ENCODE measurements at regions of chr21 and their contacts with region 1.

Region 1: DNA sequence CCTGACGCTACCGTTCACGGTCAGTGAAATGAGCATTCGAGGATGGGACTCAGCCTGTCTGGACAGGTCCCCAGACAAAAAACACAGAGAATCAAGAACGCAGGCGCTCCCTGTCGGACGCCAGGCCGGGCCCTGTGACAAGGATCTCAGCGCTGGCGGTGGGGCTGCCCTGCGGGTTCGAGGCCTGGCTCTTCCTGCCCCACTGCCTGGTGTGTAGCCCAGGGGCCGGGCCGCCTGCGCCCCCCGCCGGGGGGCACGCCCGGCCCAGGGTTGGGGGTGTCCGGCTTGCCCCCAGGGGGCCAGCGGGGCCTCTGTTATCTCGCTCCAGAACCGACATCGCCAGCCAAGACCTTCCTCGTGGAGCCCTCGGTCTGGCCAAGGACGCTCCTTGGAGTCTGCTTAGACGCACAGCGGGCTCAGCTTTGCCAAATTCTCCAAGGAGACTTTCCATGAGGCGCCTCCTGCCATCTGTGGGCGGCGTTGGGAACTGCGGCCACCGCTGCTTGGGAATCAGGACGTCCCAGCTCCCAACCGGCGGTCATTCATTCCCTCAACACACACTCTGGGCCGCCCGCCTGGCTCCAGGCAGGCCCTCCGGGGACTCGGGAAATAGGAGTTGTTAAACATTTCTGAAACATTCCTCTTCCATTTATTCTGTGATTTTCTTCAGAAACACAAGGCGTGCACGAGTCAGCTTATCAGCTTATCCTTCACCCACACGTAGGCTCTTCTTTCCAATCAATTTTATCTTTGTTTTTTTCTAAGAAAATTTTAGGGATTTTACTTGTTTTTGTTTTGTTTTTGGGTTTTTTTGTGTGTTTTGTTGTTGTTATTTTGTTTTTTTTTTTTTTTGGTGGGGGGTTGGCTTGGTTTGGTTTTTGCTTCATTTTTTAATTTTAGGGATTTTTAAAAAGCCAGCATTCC is 11.4 kb upstream of the RIPK4 start:
- DNase-seq: peak; percentile 97
- ATAC-seq: peak; percentile 83
- H3K4me3 Mint-ChIP-seq: peak overlapping the region; percentile 47
- H3K27ac Mint-ChIP-seq: peak overlapping the region; percentile 67; the same call in 1 of the 2 replicates
- H3K4me1 Mint-ChIP-seq: peaks cover 25% of the 10 kb centered on the region
- H3K27me3 Mint-ChIP-seq: peaks cover 9% of the 10 kb centered on the region
- CTCF ChIP-seq: peak; percentile 63

Region 2: DNA sequence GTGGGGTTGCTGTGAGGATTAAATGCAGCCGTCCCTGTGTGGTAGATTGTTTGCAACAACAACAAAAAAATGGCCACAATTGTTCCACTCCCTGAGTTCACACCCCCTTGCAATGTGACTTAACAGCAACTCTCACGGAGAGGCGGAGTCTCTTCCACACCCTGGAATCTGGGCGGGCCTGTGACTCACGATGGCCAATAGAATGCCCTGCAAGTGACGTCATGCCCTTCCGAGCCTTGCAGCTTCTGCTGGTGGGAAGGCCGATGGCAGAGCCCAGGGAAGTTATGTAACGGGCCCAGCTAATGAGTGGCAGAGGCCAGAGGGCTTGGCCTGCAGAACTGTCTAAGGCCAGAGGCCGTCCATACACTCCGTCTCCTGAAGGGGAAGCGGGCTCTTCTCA is 99.3 kb before region 1 on chr21:
- CTCF ChIA-PET with region 1: interaction called, 11 read pairs
- POLR2A ChIA-PET with region 1: no interaction called
- DNase-seq: peak; percentile 85
- ATAC-seq: peak; percentile 97
- H3K4me3 Mint-ChIP-seq: no peak overlapping the region
- H3K27ac Mint-ChIP-seq: peak overlapping the region; percentile 76
- H3K4me1 Mint-ChIP-seq: peaks cover 27% of the 10 kb centered on the region
- H3K27me3 Mint-ChIP-seq: no peaks in the 10 kb centered on the region; the same call in 1 of the 2 replicates
- CTCF ChIP-seq: no peak

Region 3: DNA sequence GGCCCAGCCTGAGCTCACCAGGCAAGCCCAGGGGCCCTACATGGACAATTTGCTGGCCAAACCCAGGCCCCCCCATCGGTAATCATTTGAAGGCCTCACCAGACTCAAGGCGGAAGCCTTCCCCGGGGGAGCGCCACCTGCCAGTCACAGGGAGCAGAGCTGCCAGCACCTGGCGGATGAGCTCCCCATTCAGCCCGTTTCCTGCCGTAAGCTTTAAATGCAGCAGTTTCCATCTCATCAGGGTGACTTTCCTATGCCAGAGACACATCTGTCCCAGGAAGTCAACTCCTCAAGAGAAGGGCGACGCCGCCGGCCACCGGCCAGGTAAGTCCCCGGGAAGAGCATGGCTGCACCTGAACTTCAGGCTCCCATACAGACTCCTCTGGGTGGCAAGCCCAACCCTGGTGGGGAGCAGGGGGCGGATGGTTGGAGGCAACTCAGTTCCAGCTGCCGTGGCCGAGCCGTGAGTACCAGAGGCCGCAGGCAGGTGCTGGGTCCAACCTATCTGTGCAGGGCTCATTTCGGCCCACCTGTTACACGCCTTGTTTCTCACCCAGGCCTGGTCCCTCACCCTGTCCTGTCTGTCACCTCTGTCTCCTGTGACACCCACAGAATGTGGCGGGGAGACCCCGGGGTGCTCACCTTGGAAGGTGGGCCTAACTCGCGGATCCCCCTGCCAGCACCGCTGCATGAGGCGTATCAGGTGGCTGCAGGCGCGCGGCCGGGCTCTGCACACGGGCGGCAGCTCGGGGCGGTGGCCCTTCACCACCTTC is 32.1 kb before region 1 on chr21:
- CTCF ChIA-PET with region 1: interaction called, 16 read pairs
- POLR2A ChIA-PET with region 1: no interaction called
- DNase-seq: peak; percentile 44
- ATAC-seq: peak; percentile 69
- H3K4me3 Mint-ChIP-seq: no peak overlapping the region
- H3K27ac Mint-ChIP-seq: no peak overlapping the region
- H3K4me1 Mint-ChIP-seq: peaks cover 7% of the 10 kb centered on the region
- H3K27me3 Mint-ChIP-seq: no peaks in the 10 kb centered on the region
- CTCF ChIP-seq: no peak

Region 4: DNA sequence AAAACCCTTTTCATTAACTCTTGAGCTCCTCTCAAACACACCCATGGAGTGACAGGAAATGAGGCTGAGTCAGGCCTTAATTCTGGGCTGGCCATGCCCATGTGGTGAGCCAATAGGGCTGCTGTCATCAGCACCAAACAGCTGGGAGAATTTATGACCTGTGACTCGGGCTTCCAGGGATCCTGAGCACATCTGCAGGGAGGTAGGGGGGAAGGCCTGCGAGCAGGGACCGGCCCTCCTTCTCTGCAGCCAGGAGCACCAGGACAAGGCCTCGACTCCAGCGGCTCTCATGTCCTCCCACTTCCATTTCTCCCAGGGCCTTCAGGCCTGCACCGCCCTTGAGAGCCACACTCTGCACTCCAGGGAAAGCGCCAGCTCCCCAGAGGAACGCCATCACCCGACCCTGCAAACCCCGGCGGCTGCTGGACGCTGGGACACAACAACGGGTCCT is 26.0 kb before region 1 on chr21:
- CTCF ChIA-PET with region 1: interaction called, 16 read pairs
- POLR2A ChIA-PET with region 1: interaction called, 3 read pairs
- DNase-seq: no peak
- ATAC-seq: no peak; the same call in 1 of the 2 replicates
- H3K4me3 Mint-ChIP-seq: no peak overlapping the region
- H3K27ac Mint-ChIP-seq: no peak overlapping the region
- H3K4me1 Mint-ChIP-seq: peaks cover 53% of the 10 kb centered on the region
- H3K27me3 Mint-ChIP-seq: no peaks in the 10 kb centered on the region; the same call in 1 of the 2 replicates
- CTCF ChIP-seq: no peak

Region 5: GRCh38 chr21:42073145-42074092 is 295.2 kb after region 1 on chr21:
- CTCF ChIA-PET with region 1: no interaction called
- POLR2A ChIA-PET with region 1: no interaction called
- DNase-seq: no peak
- ATAC-seq: no peak
- H3K4me3 Mint-ChIP-seq: no peak overlapping the region
- H3K27ac Mint-ChIP-seq: no peak overlapping the region
- H3K4me1 Mint-ChIP-seq: no peaks in the 10 kb centered on the region
- H3K27me3 Mint-ChIP-seq: no peaks in the 10 kb centered on the region
- CTCF ChIP-seq: no peak